Heart right ventricle (tissue), 16 donors: ENCODE measurements at regions of chr2 and their contacts with region 1.

Region 1: DNA sequence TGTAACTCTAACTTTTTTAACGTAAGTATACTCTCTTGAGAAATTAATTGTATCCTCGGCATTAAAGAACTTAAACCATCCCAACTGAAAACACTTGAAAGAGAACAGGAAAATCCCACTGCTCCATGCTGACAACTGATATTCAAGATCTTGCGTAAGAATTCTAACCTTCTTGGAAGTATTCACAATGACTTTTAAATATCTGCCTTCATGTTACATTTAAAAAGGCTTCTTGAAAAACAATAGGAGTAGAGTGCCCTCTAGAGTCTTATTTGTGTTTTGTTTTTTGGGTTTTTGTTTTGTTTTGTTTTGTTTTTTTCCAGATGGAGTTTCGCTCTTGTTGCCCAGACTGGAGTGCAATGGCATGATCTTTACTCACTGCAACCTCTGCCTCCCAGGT is 65.4 kb upstream of the DNAJC10 start:
- DNase-seq: no peak
- ATAC-seq: peak in 7 of 8 donors; percentile 39 to 79 (median 55)
- H3K4me3 ChIP-seq: no peak overlapping the region
- H3K27ac ChIP-seq: no peak overlapping the region
- H3K4me1 ChIP-seq: peaks cover 0 to 13% (median 0%) of the 10 kb centered on the region in 9 donors
- H3K27me3 ChIP-seq: no peaks in the 10 kb centered on the region
- CTCF ChIP-seq: peak; percentile 10 to 78 (median 61)

Region 2: DNA sequence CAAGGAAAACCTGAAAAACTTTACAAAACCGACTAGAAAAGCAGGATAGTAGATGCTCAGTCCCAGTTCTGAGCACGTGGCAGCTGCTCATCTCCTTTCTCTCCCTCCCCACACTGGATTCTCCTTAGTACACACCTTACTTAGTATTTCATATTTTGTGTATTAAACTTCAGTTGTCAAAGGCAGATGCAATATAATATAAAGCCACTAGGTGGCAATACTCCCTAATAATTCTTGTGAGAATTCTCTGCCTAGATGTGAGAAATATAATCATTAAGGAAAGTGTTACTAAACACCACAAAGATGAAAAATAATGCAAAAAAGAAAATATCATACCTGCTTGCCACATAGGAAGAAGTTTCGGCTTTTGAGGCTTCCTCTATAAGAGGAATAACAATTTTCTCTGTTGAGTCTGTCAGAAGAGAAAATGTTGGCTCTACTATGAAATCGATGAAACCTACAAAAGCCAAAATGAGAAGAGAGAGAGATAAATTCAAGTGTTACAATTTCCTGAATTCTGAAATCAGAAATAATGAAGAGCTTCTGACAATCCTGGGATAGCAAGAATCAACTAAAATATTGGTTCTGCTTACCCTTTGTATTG is 464.5 kb before region 1 on chr2:
- intact Hi-C with region 1: loop called in 9 of 10 experiments (anchors 1 to 5 kb)
- DNase-seq: no peak
- ATAC-seq: peak; percentile 22 to 72 (median 51)
- H3K4me3 ChIP-seq: no peak overlapping the region
- H3K27ac ChIP-seq: peak overlapping the region in 3 of 10 donors; percentile 3 to 45 (median 27)
- H3K4me1 ChIP-seq: peaks cover 0 to 10% (median 5%) of the 10 kb centered on the region in 9 donors
- H3K27me3 ChIP-seq: no peaks in the 10 kb centered on the region
- CTCF ChIP-seq: peak; percentile 68 to 90 (median 81)

Region 3: DNA sequence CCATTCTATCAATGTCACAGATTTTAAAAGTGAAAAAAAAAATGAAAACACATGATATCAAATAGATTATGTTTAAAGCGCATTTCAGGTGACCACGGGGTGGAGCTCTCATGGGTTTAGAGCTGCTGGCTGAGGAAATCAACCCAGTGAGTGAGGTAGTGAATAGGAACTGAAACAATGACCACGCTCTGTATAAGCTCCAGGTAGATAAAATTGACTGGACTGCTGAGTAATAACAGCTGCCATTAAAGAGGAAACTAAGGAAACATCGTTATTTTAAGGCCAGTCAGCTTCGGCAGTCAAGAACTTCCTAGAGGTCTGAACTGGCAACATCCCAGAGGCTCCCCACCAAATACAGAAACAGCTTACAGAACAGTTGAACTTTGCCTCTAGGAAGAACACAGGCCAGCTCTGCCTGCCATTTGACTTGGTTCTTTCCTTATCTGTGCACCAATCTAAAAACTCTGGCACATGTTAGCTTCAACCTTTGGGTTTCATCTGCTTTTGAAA is 409.8 kb before region 1 on chr2:
- intact Hi-C with region 1: loop called in 1 of 10 experiments (anchors 5 kb)
- DNase-seq: no peak
- ATAC-seq: peak; percentile 43 to 75 (median 66)
- H3K4me3 ChIP-seq: no peak overlapping the region
- H3K27ac ChIP-seq: peak overlapping the region in 2 of 10 donors; percentile 49 to 50
- H3K4me1 ChIP-seq: peaks cover 0 to 22% (median 9%) of the 10 kb centered on the region in 9 donors
- H3K27me3 ChIP-seq: no peaks in the 10 kb centered on the region
- CTCF ChIP-seq: peak in 6 of 9 donors; percentile 32 to 53 (median 48)

Region 4: GRCh38 chr2:182694189-182694588 is 43.5 kb after region 1 on chr2:
- intact Hi-C with region 1: no loop called
- DNase-seq: no peak
- ATAC-seq: no peak
- H3K4me3 ChIP-seq: no peak overlapping the region
- H3K27ac ChIP-seq: no peak overlapping the region
- H3K4me1 ChIP-seq: no peaks in the 10 kb centered on the region
- H3K27me3 ChIP-seq: no peaks in the 10 kb centered on the region
- CTCF ChIP-seq: no peak

Region 5: DNA sequence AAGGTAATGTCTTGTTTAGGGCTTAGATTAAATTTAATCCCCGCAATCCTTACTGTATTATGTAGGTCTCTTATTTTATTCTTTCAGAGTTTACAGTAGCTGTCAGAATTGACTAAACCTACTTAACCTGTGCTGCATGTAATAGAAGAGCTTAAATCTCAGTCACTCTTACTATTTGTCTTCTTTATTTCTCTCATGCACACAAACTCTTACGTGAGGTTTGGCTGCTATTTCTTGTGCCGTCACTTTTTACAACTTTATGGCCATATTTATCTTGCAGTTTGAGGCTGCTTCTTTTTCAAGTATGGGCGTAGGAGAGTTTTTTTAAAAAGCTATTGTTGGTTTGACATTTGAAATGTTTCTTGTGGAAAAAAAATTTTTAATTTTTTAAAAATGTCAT is 77.3 kb after region 1 on chr2:
- intact Hi-C with region 1: no loop called
- DNase-seq: no peak
- ATAC-seq: no peak
- H3K4me3 ChIP-seq: no peak overlapping the region
- H3K27ac ChIP-seq: no peak overlapping the region
- H3K4me1 ChIP-seq: no peaks in the 10 kb centered on the region
- H3K27me3 ChIP-seq: no peaks in the 10 kb centered on the region
- CTCF ChIP-seq: no peak